Stomach (tissue), 19 donors: ENCODE measurements at regions of chr21 and their contacts with region 1.

Region 1: GRCh38 chr21:29477941-29478340 is 179.2 kb downstream of the BACH1 start:
- DNase-seq: no peak
- H3K4me3 ChIP-seq: no peak overlapping the region
- H3K27ac ChIP-seq: no peak overlapping the region
- H3K4me1 ChIP-seq: no peaks in the 10 kb centered on the region
- H3K27me3 ChIP-seq: no peaks in the 10 kb centered on the region
- CTCF ChIP-seq: no peak
- EP300 ChIP-seq: no peak
- POLR2A ChIP-seq: no peak

Region 2: GRCh38 chr21:29523646-29524045 is 45.7 kb after region 1 on chr21:
- intact Hi-C with region 1: no loop called
- DNase-seq: peak in 1 of 2 donors; percentile 23
- H3K4me3 ChIP-seq: no peak overlapping the region
- H3K27ac ChIP-seq: no peak overlapping the region
- H3K4me1 ChIP-seq: no peaks in the 10 kb centered on the region
- H3K27me3 ChIP-seq: no peaks in the 10 kb centered on the region
- CTCF ChIP-seq: no peak
- EP300 ChIP-seq: no peak
- POLR2A ChIP-seq: no peak

Region 3: GRCh38 chr21:29849735-29850176 is 371.8 kb after region 1 on chr21:
- intact Hi-C with region 1: loop called (anchors 10 kb)
- DNase-seq: peak; percentile 35 to 85
- H3K4me3 ChIP-seq: no peak overlapping the region
- H3K27ac ChIP-seq: no peak overlapping the region
- H3K4me1 ChIP-seq: no peaks in the 10 kb centered on the region
- H3K27me3 ChIP-seq: no peaks in the 10 kb centered on the region
- CTCF ChIP-seq: peak in 4 of 7 experiments; percentile 20 to 46 (median 42)
- EP300 ChIP-seq: no peak
- POLR2A ChIP-seq: no peak